Naive thymus-derived CD4-positive, alpha-beta T cell (primary cell): ENCODE measurements at regions of chr16 and their contacts with region 1.

Region 1: GRCh38 chr16:49441366-49441780 is 67.8 kb downstream of the C16orf78 start:
- DNase-seq: peak; percentile 23 to 87 (median 83)
- ATAC-seq: peak; percentile 90
- H3K4me3 ChIP-seq: peak overlapping the region; percentile 19
- H3K4me3 Mint-ChIP-seq: peak overlapping the region; percentile 53 to 87 (median 73)
- H3K27ac ChIP-seq: peak overlapping the region; percentile 75
- H3K27ac Mint-ChIP-seq: peak overlapping the region; percentile 73 to 97 (median 92)
- H3K4me1 ChIP-seq: peaks cover 9 to 25% of the 10 kb centered on the region in 2 donors
- H3K4me1 Mint-ChIP-seq: peaks cover 15 to 45% (median 29%) of the 10 kb centered on the region in 7 donors
- H3K27me3 ChIP-seq: no peaks in the 10 kb centered on the region
- H3K27me3 Mint-ChIP-seq: peaks cover 0 to 6% (median 0%) of the 10 kb centered on the region in 5 donors

Region 2: GRCh38 chr16:49148410-49148809 is 293.0 kb before region 1 on chr16:
- CTCF ChIA-PET with region 1: no interaction called
- POLR2A ChIA-PET with region 1: no interaction called
- intact Hi-C with region 1: no loop called
- DNase-seq: no peak
- ATAC-seq: no peak
- H3K4me3 ChIP-seq: no peak overlapping the region
- H3K4me3 Mint-ChIP-seq: no peak overlapping the region
- H3K27ac ChIP-seq: no peak overlapping the region
- H3K27ac Mint-ChIP-seq: no peak overlapping the region
- H3K4me1 ChIP-seq: no peaks in the 10 kb centered on the region
- H3K4me1 Mint-ChIP-seq: no peaks in the 10 kb centered on the region
- H3K27me3 ChIP-seq: no peaks in the 10 kb centered on the region
- H3K27me3 Mint-ChIP-seq: peaks cover 0 to 5% (median 0%) of the 10 kb centered on the region in 5 donors

Region 3: GRCh38 chr16:49407873-49408550 is 33.4 kb before region 1 on chr16:
- CTCF ChIA-PET with region 1: no interaction called
- POLR2A ChIA-PET with region 1: no interaction called
- intact Hi-C with region 1: loop called in 1 of 2 experiments (anchors 1 kb)
- DNase-seq: peak; percentile 38 to 67 (median 60)
- ATAC-seq: peak; percentile 71
- H3K4me3 ChIP-seq: no peak overlapping the region
- H3K4me3 Mint-ChIP-seq: peak overlapping the region in 3 of 10 donors; percentile 12 to 53 (median 17)
- H3K27ac ChIP-seq: no peak overlapping the region
- H3K27ac Mint-ChIP-seq: no peak overlapping the region
- H3K4me1 ChIP-seq: no peaks in the 10 kb centered on the region
- H3K4me1 Mint-ChIP-seq: no peaks in the 10 kb centered on the region
- H3K27me3 ChIP-seq: no peaks in the 10 kb centered on the region
- H3K27me3 Mint-ChIP-seq: peaks cover 5 to 10% (median 6%) of the 10 kb centered on the region in 5 donors

Region 4: DNA sequence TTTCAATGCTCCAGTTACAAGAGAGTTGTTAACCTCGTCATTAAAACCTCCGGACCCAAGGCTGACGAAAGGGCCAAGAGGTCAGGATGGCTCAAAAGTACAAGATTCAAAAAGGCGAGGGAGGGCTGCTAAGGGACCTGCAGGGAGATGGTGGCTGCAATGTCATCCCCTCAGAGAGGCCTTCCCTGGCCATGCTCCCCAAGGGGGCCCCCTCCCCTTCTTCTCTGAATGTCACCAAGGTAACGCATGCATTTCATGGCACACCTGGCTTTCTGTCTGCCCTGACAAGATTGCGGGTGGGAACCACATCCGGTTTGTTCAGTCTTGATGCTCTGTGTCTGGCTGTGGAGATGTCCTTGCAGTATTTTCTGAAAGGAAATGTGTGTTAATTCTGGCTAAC is 22.2 kb after region 1 on chr16:
- CTCF ChIA-PET with region 1: no interaction called
- POLR2A ChIA-PET with region 1: interaction called, 5 read pairs
- intact Hi-C with region 1: loop called (anchors 1 kb)
- DNase-seq: peak; percentile 18 to 94 (median 89)
- ATAC-seq: peak; percentile 86
- H3K4me3 ChIP-seq: peak overlapping the region; percentile 15
- H3K4me3 Mint-ChIP-seq: peak overlapping the region; percentile 64 to 90 (median 79)
- H3K27ac ChIP-seq: peak overlapping the region; percentile 70
- H3K27ac Mint-ChIP-seq: peak overlapping the region; percentile 77 to 99 (median 95)
- H3K4me1 ChIP-seq: peaks cover 27 to 49% of the 10 kb centered on the region in 2 donors
- H3K4me1 Mint-ChIP-seq: peaks cover 12 to 80% (median 67%) of the 10 kb centered on the region in 7 donors
- H3K27me3 ChIP-seq: no peaks in the 10 kb centered on the region
- H3K27me3 Mint-ChIP-seq: peaks cover 0 to 17% (median 0%) of the 10 kb centered on the region in 5 donors

Region 5: DNA sequence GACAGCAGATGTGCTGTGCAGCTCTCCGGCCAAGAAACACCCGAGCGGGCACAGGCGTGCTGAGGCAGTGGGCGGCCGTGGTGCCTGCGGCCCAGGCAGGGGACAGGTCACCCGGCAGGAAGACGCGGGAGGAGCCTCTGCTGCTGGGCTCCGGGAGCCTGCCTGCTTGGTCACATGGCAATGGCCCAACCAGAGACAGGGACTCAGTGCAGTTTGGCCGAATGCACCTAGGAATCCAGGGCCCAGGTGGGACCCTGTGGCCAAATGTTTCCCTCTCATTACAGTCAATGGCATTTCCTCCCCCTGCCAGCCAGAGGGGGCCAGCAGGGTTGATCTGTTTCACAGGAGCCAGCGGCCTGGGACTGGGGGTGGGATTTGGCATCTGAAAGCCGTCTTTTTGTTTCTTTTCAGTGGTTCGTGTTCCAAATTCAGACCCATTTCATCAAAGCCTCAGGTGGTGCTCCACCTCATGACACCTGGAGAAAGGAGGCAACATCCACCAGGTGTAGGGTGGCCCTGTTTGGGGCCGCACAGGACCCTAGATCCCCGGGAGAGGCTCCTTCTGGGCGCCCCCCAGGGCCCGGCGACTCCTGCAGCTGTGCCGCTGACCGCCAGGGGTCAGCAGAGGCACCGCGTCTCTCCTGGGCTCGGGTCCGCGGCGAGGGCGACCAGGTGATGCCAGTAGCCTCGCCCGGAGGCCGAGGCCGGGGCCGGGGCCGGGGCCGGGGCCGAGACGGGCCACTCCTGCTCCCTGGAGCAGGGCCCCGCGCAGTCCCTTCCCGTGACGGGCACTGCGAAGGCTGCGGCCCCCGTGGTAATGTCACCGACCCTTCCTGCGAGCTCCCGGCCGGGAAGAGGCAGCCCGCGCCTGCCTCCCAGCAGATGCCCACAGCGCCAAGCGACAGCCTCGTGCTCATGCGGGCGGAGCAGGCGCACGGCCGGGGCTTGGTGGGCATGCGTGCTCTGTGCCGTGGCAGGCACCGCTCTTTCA is 50.7 kb after region 1 on chr16:
- CTCF ChIA-PET with region 1: no interaction called
- POLR2A ChIA-PET with region 1: no interaction called
- intact Hi-C with region 1: loop called (anchors 1 to 2 kb)
- DNase-seq: peak in 8 of 9 donors; percentile 20 to 63 (median 40)
- ATAC-seq: peak; percentile 60
- H3K4me3 ChIP-seq: no peak overlapping the region
- H3K4me3 Mint-ChIP-seq: peak overlapping the region in 7 of 10 donors; percentile 12 to 66 (median 39)
- H3K27ac ChIP-seq: no peak overlapping the region
- H3K27ac Mint-ChIP-seq: no peak overlapping the region
- H3K4me1 ChIP-seq: no peaks in the 10 kb centered on the region
- H3K4me1 Mint-ChIP-seq: peaks cover 0 to 15% (median 6%) of the 10 kb centered on the region in 7 donors
- H3K27me3 ChIP-seq: no peaks in the 10 kb centered on the region
- H3K27me3 Mint-ChIP-seq: no peaks in the 10 kb centered on the region

Region 6: DNA sequence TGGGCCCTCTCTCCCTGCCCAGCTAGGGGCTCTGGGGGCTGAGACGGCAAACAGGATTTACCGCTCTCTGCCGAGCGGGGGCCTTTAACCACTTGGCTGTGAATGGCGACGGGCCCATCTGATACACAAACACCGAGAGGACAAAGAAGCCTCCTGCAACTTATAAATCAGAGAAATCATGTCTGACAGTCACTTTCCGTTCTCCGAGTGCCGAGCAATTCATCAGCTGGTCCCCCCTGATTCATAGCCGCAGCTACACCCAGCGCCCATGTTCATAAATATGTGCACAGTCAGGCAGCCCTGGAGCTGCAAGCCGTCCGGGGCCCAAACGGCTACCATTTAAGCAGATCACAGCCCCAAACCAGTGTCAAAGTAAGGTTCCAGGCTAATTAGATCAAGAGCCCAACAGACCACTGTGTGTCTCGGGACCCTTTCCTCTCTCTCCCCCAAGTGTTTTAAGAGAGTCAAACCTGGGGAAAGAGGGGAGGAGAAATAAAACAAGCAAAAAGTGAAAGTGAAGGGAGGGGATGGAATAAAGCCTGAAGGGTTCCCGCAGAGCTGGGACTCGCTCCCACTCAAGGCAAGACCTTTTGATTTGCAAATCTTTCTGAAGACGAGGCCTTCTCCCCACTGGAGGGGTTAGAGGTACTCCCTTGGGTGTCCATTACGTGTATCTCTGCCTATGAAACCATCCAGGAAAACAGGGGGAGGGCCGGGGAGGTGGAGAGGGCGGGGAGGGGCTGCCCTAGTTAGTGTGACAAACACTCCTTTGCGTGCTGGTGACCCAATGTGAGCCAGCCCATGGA is 86.9 kb after region 1 on chr16:
- CTCF ChIA-PET with region 1: no interaction called
- POLR2A ChIA-PET with region 1: no interaction called
- intact Hi-C with region 1: loop called in 1 of 2 experiments (anchors 1 kb)
- DNase-seq: peak in 6 of 9 donors; percentile 7 to 42 (median 31)
- ATAC-seq: peak; percentile 55
- H3K4me3 ChIP-seq: peak overlapping the region; percentile 56
- H3K4me3 Mint-ChIP-seq: peak overlapping the region; percentile 73 to 95 (median 88)
- H3K27ac ChIP-seq: peak overlapping the region; percentile 66
- H3K27ac Mint-ChIP-seq: peak overlapping the region; percentile 38 to 98 (median 94)
- H3K4me1 ChIP-seq: no peaks in the 10 kb centered on the region
- H3K4me1 Mint-ChIP-seq: peaks cover 6 to 26% (median 16%) of the 10 kb centered on the region in 7 donors
- H3K27me3 ChIP-seq: no peaks in the 10 kb centered on the region
- H3K27me3 Mint-ChIP-seq: peaks cover 0 to 8% (median 0%) of the 10 kb centered on the region in 5 donors

Region 7: GRCh38 chr16:49592546-49593423 is 151.4 kb after region 1 on chr16:
- CTCF ChIA-PET with region 1: interaction called, 13 read pairs
- POLR2A ChIA-PET with region 1: no interaction called
- intact Hi-C with region 1: loop called in 1 of 2 experiments (anchors 1 kb)
- DNase-seq: peak in 6 of 9 donors; percentile 24 to 61 (median 52)
- ATAC-seq: peak; percentile 66
- H3K4me3 ChIP-seq: no peak overlapping the region
- H3K4me3 Mint-ChIP-seq: no peak overlapping the region
- H3K27ac ChIP-seq: no peak overlapping the region
- H3K27ac Mint-ChIP-seq: peak overlapping the region in 4 of 9 donors; percentile 67 to 86 (median 72)
- H3K4me1 ChIP-seq: no peaks in the 10 kb centered on the region
- H3K4me1 Mint-ChIP-seq: peaks cover 2 to 42% (median 35%) of the 10 kb centered on the region in 7 donors
- H3K27me3 ChIP-seq: no peaks in the 10 kb centered on the region
- H3K27me3 Mint-ChIP-seq: peaks cover 5 to 10% (median 6%) of the 10 kb centered on the region in 5 donors

Region 8: GRCh38 chr16:49855280-49855821 is 414.0 kb after region 1 on chr16:
- CTCF ChIA-PET with region 1: no interaction called
- POLR2A ChIA-PET with region 1: no interaction called
- intact Hi-C with region 1: loop called (anchors 10 kb)
- DNase-seq: peak; percentile 25 to 60 (median 58)
- ATAC-seq: peak; percentile 76
- H3K4me3 ChIP-seq: no peak overlapping the region
- H3K4me3 Mint-ChIP-seq: peak overlapping the region in 7 of 10 donors; percentile 16 to 90 (median 41)
- H3K27ac ChIP-seq: no peak overlapping the region
- H3K27ac Mint-ChIP-seq: no peak overlapping the region
- H3K4me1 ChIP-seq: peaks cover 0 to 5% of the 10 kb centered on the region in 2 donors
- H3K4me1 Mint-ChIP-seq: peaks cover 0 to 20% (median 11%) of the 10 kb centered on the region in 7 donors
- H3K27me3 ChIP-seq: peaks cover 0 to 4% of the 10 kb centered on the region in 2 donors
- H3K27me3 Mint-ChIP-seq: peaks cover 28 to 67% (median 45%) of the 10 kb centered on the region in 5 donors